ENCODE measurements at regions of chr17 and their contacts with region 1.

Region 1: DNA sequence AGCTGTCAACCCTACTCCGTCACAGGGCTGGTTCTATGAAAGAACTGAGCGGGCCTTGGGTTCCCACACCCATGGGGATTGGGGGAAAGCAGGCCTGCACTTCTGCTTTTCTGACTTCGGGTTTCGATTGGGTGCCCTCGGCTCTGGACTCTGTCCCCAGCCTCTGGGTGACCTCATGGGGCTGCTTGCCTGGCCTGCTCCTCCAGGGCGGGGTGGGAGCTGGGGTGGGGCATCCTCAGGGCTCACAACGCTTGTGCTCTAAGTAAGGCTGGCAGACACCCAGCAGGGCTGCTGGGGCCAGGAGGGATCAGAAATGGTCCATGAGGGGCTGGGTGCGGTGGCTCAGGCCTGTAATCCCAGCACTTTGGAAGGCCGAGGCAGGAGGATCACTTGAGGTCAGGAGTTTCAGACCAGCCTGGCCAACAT is 19.2 kb downstream of the ARHGAP27 start:
- H3K4me3 Mint-ChIP-seq: no peak overlapping the region
- H3K27ac Mint-ChIP-seq: peak overlapping the region; percentile 75
- H3K4me1 Mint-ChIP-seq: peaks cover 76% of the 10 kb centered on the region
- H3K27me3 Mint-ChIP-seq: no peaks in the 10 kb centered on the region

Region 2: DNA sequence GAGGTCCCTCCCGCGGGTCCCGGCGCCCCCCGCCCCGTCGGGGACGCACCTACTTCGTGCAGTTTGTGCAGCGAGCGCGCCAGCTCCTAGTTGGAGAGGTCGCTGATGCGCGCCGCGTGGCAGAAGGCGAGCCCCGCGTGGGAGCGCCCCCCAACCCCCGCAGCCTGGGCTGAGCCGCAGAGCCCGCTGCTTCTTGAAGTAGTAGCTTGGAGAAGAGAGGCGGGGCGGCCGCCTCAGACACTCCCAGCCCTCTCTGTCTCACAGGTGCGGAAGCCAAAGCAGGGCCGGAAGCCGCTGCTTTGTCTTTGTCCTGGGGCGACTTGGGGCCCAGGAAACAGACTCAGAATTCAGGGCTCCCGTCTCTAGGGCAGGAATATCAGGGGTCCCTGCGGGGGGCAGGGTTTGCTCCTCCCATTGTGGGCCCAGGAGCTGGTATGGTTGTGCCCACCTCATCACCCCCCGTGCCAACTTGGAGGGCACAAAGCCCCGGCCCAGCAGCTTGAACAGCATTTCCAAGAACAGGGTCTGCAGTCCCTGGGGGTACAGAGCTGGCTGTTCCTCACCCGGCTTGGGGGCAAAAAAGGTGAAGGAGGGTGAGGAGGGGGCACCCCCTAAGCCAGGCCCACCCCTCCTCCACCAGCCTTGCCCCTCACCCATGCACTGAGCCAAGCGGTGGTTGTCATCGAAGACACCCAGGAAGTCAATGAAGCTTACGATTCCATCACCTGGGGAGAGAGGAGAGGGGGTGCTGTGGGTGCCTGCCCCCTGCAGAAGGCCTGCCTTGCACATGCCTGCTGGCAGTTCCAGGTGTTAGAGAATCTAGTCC is 165.2 kb before region 1 on chr17:
- intact Hi-C with region 1: no loop called
- H3K4me3 Mint-ChIP-seq: no peak overlapping the region
- H3K27ac Mint-ChIP-seq: peak overlapping the region; percentile 64
- H3K4me1 Mint-ChIP-seq: peaks cover 40% of the 10 kb centered on the region
- H3K27me3 Mint-ChIP-seq: no peaks in the 10 kb centered on the region

Region 3: GRCh38 chr17:45428050-45428617 is 14.6 kb after region 1 on chr17:
- intact Hi-C with region 1: loop called (anchors 2 kb)
- H3K4me3 Mint-ChIP-seq: peak overlapping the region; percentile 73
- H3K27ac Mint-ChIP-seq: peak overlapping the region; percentile 87
- H3K4me1 Mint-ChIP-seq: peaks cover 79% of the 10 kb centered on the region
- H3K27me3 Mint-ChIP-seq: no peaks in the 10 kb centered on the region